Natural killer cell (primary cell): ENCODE measurements at regions of chr5 and their contacts with region 1.

Region 1: DNA sequence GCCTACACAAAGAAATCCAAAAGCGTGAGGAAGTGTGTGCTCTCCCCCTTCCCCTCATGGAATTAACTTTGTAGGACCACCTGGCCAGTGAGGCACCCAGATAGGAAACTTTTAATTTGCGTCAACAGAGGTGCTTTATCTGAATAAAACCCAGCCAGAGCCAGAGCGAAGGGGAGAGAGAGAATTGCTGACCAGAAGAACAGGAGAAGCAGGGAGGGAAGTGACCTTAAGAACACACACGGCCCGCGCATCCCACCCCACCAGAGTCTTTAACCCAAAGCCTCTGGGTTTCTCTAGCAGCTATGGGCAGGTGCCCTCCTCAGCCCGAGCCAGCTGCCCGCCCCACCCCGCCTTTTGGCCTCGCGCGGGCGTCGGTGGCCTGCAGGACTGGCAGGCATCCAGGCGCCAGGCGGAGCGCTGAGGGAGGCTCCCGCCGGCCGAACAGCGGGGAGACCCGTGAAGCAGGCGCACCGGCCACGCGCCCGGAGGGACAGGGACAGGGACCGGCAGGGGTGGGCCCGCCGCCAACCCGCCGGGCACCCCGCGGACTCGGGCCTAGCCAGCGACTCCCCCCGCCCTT is 580 bp downstream of the ERAP1 start:
- DNase-seq: no peak
- ATAC-seq: no peak
- H3K4me3 ChIP-seq: peak overlapping the region; percentile 73
- H3K4me3 Mint-ChIP-seq: peak overlapping the region; percentile 99
- H3K27ac ChIP-seq: peak overlapping the region; percentile 93
- H3K27ac Mint-ChIP-seq: peak overlapping the region; percentile 99
- H3K4me1 ChIP-seq: peaks cover 36% of the 10 kb centered on the region
- H3K4me1 Mint-ChIP-seq: peaks cover 56 to 57% of the 10 kb centered on the region in 2 donors
- H3K27me3 ChIP-seq: no peaks in the 10 kb centered on the region
- H3K27me3 Mint-ChIP-seq: no peaks in the 10 kb centered on the region
- CTCF ChIP-seq: no peak

Region 2: DNA sequence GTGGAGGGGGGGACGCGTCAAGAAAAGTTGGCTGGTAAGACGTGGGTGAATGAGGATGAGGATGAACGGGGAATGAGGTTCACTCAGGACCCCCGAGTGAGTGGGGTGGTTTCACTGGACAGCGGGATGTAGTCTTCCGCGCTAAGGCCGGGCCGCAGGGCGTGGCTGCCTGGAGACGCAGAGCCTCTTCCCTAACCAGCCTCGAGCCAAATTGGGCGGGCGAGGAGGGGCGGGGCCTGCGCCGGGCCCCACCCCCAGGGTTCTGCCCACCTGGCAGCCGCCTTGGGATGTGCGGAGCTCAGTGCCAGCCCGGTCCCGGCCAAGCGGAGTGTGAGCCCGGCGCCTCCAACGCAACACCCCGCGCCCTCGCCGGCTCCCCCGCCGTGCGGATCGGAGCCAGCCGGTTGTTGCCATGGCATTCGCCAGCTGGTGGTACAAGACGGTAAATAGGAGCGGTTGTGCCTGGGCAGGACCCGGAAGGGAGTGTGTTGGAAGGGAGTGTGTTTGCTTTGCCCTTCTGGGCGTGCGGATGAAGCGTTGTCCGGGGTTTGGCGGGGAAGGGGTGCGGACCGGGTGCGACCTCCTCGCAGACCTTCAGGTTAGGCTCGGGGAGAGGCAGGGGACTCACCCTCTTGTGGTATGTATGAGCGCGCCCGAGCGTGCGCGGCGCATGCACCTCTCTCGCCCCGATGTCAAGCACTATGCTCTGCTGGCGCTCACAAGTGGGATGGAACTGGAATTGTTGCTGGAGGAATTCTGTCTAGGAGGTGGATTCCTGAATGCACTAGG is 144.2 kb before region 1 on chr5:
- intact Hi-C with region 1: loop called (anchors 5 kb)
- DNase-seq: peak; percentile 82 to 88
- ATAC-seq: peak; percentile 64 to 81 (median 68)
- H3K4me3 ChIP-seq: peak overlapping the region; percentile 83
- H3K4me3 Mint-ChIP-seq: peak overlapping the region; percentile 95
- H3K27ac ChIP-seq: peak overlapping the region; percentile 96
- H3K27ac Mint-ChIP-seq: peak overlapping the region; percentile 98 to 99
- H3K4me1 ChIP-seq: peaks cover 33% of the 10 kb centered on the region
- H3K4me1 Mint-ChIP-seq: peaks cover 74 to 80% of the 10 kb centered on the region in 2 donors
- H3K27me3 ChIP-seq: no peaks in the 10 kb centered on the region
- H3K27me3 Mint-ChIP-seq: no peaks in the 10 kb centered on the region
- CTCF ChIP-seq: no peak

Region 3: GRCh38 chr5:96876292-96876850 is 69.2 kb after region 1 on chr5 and contains the start of gene ERAP2:
- intact Hi-C with region 1: loop called (anchors 5 kb)
- DNase-seq: peak in 1 of 2 donors; percentile 76
- ATAC-seq: peak; percentile 82 to 85 (median 82)
- H3K4me3 ChIP-seq: peak within 1 kb of the TSS; percentile 96
- H3K4me3 Mint-ChIP-seq: peak within 1 kb of the TSS; percentile 98
- H3K27ac ChIP-seq: peak within 1 kb of the TSS; percentile 90
- H3K27ac Mint-ChIP-seq: peak within 1 kb of the TSS; percentile 87 to 94
- H3K4me1 ChIP-seq: peaks cover 22% of the 10 kb centered on the region
- H3K4me1 Mint-ChIP-seq: peaks cover 26 to 44% of the 10 kb centered on the region in 2 donors
- H3K27me3 ChIP-seq: no peaks in the 10 kb centered on the region
- H3K27me3 Mint-ChIP-seq: no peaks in the 10 kb centered on the region
- CTCF ChIP-seq: no peak
- total RNA-seq, gene ERAP2: 41.5 to 81.8 (median 79.2) TPM